Activated CD4-positive, alpha-beta T cell treated with anti-CD3 and anti-CD28 coated beads for 36 hours (primary cell): ENCODE measurements at regions of chrX and their contacts with region 1.

Region 1: DNA sequence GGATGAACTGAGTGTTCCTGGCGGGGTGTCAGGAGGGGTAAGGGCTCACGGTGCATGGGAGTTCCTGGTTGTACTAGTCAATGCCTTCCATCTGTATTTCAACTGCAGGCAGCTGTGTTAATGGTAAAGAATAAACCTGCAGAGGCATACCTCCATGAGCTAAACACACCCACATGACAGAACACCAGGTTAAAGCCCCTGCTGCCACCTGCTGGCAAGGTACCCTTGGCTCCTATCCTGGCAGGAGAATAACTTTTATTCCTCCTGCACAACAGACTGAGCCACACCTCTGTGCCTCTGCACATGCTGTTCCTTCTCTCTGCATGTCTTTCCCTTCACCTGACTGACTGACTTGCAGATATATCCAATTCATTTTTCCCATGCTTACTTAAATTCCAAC is 11.1 kb downstream of the ITIH6 start:
- DNase-seq: peak; percentile 58
- ATAC-seq: peak; percentile 73
- H3K4me3 Mint-ChIP-seq: no peak overlapping the region
- H3K27ac Mint-ChIP-seq: no peak overlapping the region
- H3K4me1 Mint-ChIP-seq: no peaks in the 10 kb centered on the region
- H3K27me3 Mint-ChIP-seq: no peaks in the 10 kb centered on the region

Region 2: GRCh38 chrX:54248309-54248708 is 538.7 kb before region 1 on chrX:
- CTCF ChIA-PET with region 1: no interaction called
- POLR2A ChIA-PET with region 1: no interaction called
- intact Hi-C with region 1: loop called in 1 of 2 experiments (anchors 10 kb)
- DNase-seq: no peak
- ATAC-seq: peak; percentile 49
- H3K4me3 Mint-ChIP-seq: no peak overlapping the region
- H3K27ac Mint-ChIP-seq: no peak overlapping the region
- H3K4me1 Mint-ChIP-seq: no peaks in the 10 kb centered on the region
- H3K27me3 Mint-ChIP-seq: peaks cover 2% of the 10 kb centered on the region

Region 3: GRCh38 chrX:54423161-54423888 is 363.6 kb before region 1 on chrX:
- CTCF ChIA-PET with region 1: no interaction called
- POLR2A ChIA-PET with region 1: no interaction called
- intact Hi-C with region 1: loop called in 1 of 2 experiments (anchors 5 kb)
- DNase-seq: peak; percentile 28
- ATAC-seq: peak; percentile 58
- H3K4me3 Mint-ChIP-seq: no peak overlapping the region
- H3K27ac Mint-ChIP-seq: no peak overlapping the region
- H3K4me1 Mint-ChIP-seq: no peaks in the 10 kb centered on the region
- H3K27me3 Mint-ChIP-seq: no peaks in the 10 kb centered on the region